HepG2 (cell line): ENCODE measurements at regions of chr3 and their contacts with region 1.

Region 1: DNA sequence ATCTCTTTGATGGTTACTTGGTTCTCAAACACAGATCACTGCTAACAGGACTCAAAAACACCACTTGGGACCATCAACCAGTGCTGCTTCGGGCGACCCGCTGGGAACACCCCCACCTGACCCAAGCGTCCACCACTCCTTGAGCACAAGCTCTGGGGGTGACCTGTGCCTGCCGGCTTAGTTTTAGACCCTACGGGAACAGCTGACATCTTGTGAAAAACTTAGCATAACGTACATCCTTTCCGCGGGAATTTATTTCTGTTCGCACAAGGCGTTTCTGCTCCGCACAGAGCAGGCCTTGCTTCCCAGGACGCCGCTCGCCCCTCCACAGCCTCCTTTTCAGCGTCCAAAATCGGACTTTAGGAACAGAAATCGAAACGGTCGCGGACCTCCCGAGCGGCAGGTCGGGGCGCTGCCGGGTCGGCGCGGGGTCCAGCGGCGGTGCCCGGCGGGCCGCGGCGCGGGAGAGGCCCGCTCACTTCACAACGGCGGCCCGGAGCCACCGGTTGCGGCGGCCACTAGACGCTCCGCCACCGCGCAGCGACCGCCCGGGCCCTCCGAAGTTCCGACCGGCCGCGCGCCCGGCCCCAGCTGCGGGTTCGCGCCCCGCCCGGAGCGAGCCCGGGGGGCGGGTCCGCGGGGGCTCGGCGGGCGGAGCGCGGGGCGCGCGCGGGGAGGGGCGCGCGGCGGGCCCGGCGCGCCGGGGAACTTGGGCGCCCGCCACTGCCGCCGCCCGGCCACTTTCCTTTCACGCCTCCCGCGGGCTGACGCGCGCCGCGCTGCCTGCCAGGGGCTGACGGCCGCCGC is 959 bp downstream of the SFMBT1 start:
- DNase-seq: no peak
- ATAC-seq: peak; percentile 61
- H3K4me3 ChIP-seq: peak overlapping the region; percentile 75 to 91 (median 90)
- H3K27ac ChIP-seq: peak overlapping the region; percentile 62
- H3K4me1 ChIP-seq: peaks cover 56% of the 10 kb centered on the region
- H3K27me3 ChIP-seq: no peaks in the 10 kb centered on the region; a peak in 1 of 5 replicates
- CTCF ChIP-seq: no peak
- EP300 ChIP-seq: no peak
- POLR2A ChIP-seq: no peak
- RAD21 ChIP-seq: peak; percentile 24; the same call in 1 of the 2 replicates

Region 2: DNA sequence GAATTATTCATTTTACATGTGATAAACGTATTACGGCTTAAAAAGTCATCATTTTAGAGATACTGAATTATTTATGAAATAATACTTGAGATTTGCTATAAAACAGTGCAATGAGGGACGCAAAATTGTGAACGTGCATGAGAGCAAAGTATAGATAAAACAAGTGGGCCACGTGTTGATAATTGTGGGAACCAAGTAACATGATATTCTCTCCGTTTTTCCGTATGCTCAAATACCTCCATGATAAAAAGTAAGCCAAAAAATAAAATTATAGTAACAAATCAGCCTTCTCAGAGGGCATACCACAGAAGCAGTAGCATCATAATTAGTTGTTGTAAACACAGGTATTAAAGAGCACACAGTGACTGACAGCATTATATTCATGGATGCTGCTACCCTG is 41.6 kb before region 1 on chr3:
- CTCF ChIA-PET with region 1: no interaction called
- POLR2A ChIA-PET with region 1: no interaction called
- in situ Hi-C with region 1: no loop called
- intact Hi-C with region 1: loop called (anchors 5 kb)
- DNase-seq: no peak
- ATAC-seq: no peak
- H3K4me3 ChIP-seq: no peak overlapping the region
- H3K27ac ChIP-seq: no peak overlapping the region
- H3K4me1 ChIP-seq: peaks cover 35% of the 10 kb centered on the region
- H3K27me3 ChIP-seq: no peaks in the 10 kb centered on the region
- CTCF ChIP-seq: no peak
- EP300 ChIP-seq: no peak
- POLR2A ChIP-seq: no peak
- RAD21 ChIP-seq: no peak